ENCODE measurements at regions of chr9 and their contacts with region 1.

Region 1: DNA sequence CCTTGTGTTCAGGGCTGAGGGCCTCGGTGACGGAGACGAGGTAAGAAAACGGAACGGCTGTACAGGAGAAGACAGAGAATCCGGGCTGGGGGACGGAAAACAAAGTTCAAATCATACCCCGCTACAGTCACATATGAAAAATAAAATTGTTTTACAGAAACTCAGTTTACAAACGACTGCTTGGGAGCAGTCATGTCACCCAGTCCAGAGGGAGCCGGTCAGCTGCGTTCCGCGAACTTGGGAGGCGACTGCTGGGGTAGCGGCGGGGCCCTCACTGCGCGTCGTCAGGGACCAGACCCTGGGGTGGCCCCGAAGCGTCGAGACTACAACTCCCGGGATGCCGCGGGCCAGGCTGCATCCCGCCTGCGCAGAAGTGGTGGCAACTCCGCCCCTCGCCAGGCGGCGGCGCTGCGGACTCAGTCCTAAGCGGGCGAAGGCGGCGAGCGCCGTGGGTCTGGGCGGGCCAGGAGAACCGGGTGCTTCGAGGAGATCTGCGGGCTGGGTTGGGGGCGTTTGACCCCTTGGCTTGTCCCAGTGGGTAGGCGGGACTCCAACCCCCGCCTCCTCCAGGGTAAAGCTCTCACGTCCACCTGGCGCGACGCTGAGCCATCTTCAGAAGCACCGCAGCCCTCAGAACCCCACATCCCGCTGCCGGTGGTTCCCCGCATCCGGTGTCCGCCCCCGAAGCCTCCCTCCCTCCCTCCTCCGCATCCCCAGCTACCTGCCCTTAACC is 4.0 kb downstream of the SIT1 start:
- DNase-seq: peak; percentile 91 to 94 (median 94)
- H3K4me3 ChIP-seq: peak overlapping the region; percentile 46 to 91 (median 84)
- H3K27ac ChIP-seq: peak overlapping the region; percentile 83 to 87
- H3K4me1 ChIP-seq: peaks cover 0 to 61% (median 34%) of the 10 kb centered on the region in 4 experiments
- H3K27me3 ChIP-seq: no peaks in the 10 kb centered on the region

Region 2: GRCh38 chr9:35538361-35539234 is 108.1 kb before region 1 on chr9:
- CTCF ChIA-PET with region 1: no interaction called
- POLR2A ChIA-PET with region 1: no interaction called
- DNase-seq: no peak
- H3K4me3 ChIP-seq: no peak overlapping the region
- H3K27ac ChIP-seq: no peak overlapping the region
- H3K4me1 ChIP-seq: peaks cover 0 to 13% (median under 1%) of the 10 kb centered on the region in 4 experiments
- H3K27me3 ChIP-seq: no peaks in the 10 kb centered on the region

Region 3: DNA sequence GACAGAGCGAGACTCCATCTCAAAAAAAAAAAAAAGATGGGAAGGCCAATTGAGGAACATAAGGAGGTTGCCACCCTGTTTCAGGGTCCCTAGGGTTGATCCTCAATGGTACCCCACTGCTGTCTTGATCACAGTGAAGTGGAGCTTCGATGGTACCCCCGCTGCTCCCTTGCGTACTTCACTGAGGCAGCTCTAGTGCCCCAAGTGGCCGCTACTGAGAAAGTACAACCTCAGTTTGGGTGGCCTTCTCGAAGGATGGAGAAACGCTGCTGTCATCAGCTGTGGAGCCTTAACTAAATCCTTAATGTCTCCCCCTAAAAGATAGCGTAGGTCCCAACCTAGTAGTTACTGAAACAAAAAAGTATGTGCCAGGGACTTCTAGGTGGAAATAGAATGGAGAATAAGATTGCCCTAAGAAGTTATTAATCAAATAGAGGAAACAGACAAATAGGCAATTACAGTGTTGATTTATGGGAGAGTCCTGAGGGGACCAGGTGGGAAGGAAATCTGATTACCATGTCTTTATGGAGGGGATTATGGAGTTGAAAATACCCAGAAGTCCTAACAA is 35.4 kb before region 1 on chr9:
- CTCF ChIA-PET with region 1: interaction called, 95 read pairs
- POLR2A ChIA-PET with region 1: no interaction called
- DNase-seq: peak; percentile 58 to 76 (median 75)
- H3K4me3 ChIP-seq: no peak overlapping the region
- H3K27ac ChIP-seq: no peak overlapping the region
- H3K4me1 ChIP-seq: peaks cover 0 to 7% (median 6%) of the 10 kb centered on the region in 4 experiments
- H3K27me3 ChIP-seq: no peaks in the 10 kb centered on the region

Region 4: DNA sequence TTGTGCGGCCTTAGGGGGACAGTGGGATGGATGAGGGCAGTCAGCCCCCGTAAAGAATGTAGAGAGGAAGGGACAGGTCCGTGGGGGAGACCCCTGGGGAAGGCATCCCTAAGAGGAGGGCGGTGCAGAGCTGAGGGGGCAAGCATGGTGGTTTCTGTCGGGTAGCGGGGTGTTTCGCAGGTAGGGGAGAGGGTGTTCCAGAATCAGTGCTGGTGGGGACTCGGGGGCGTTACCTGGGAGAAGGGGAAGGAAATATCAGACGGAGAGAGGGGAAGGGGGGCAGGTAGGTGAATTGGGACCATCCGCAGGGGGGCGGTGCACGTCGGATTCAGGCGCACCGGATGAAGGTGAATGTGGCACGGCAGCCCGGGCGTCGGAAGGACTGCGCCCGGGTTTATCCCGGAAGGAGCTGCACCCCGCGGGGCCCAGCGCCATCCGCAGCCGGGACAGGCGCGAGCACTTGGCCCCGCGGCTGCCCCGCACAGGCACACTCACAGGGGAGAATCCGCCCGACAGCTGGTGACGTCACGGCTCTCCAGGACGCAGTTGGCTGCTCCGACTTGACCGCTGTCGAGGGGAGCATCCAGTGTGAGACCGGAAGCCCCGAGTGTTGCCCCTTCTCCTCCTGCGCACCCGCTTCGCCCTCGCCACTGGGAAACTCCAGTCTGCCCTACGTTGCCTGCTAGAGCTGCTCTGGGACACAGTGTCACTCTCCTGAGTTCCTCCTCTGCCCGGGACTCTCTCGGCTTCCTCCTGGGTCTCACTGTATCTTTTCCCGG is 29.8 kb before region 1 on chr9:
- CTCF ChIA-PET with region 1: interaction called, 95 read pairs
- POLR2A ChIA-PET with region 1: no interaction called
- DNase-seq: peak in 2 of 3 donors; percentile 53 to 66
- H3K4me3 ChIP-seq: peak overlapping the region; percentile 16 to 84 (median 67)
- H3K27ac ChIP-seq: no peak overlapping the region
- H3K4me1 ChIP-seq: peaks cover 0 to 49% (median 33%) of the 10 kb centered on the region in 4 experiments
- H3K27me3 ChIP-seq: no peaks in the 10 kb centered on the region

Region 5: GRCh38 chr9:35657546-35658136 is 10.9 kb after region 1 on chr9 and contains the start of gene RMRP:
- CTCF ChIA-PET with region 1: interaction called, 117 read pairs
- POLR2A ChIA-PET with region 1: interaction called, 14 read pairs
- DNase-seq: peak; percentile 95 to 99 (median 96)
- H3K4me3 ChIP-seq: peak within 1 kb of the TSS; percentile 81 to 89 (median 84)
- H3K27ac ChIP-seq: peak within 1 kb of the TSS; percentile 100
- H3K4me1 ChIP-seq: peaks cover 11 to 55% (median 40%) of the 10 kb centered on the region in 4 experiments
- H3K27me3 ChIP-seq: no peaks in the 10 kb centered on the region

Region 6: GRCh38 chr9:35771534-35771933 is 124.8 kb after region 1 on chr9:
- CTCF ChIA-PET with region 1: no interaction called
- POLR2A ChIA-PET with region 1: no interaction called
- DNase-seq: peak in 1 of 3 donors; percentile 53
- H3K4me3 ChIP-seq: no peak overlapping the region
- H3K27ac ChIP-seq: peak overlapping the region in 1 of 2 experiments; percentile 50
- H3K4me1 ChIP-seq: peaks cover 13 to 40% (median 17%) of the 10 kb centered on the region in 4 experiments
- H3K27me3 ChIP-seq: no peaks in the 10 kb centered on the region

Region 7: DNA sequence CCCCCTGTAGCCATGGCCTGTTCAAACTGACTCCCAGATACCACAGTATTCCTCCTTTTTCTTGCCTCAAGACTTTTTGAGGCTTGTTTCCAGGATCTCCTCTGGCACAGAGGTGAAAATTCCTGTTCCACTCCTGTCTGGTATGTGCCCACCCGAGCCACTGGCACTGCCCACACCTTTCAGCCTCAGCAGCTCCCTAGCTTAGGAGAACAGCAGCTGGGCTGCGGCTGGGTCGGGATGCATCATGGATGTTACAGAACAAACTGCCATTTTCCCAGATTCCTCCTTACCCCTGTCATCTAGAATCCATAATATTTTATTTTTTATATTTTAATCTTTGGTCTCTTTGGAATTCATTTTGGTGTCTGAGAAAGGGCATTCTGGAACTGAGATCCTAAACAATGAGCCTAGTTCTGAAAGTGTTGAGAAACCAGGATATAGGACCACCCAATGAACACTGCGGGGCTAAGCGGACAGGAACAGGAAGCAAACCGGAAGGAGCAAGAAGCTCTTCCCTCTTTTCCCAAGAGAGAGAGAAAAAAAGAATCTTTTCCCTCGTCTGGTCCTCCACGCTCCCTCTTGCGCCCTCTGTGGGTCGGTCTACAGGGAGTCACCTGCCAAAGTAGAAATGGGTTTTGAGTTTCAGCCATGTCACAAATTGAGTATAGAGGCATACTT is 298.8 kb after region 1 on chr9:
- CTCF ChIA-PET with region 1: no interaction called
- POLR2A ChIA-PET with region 1: no interaction called
- DNase-seq: peak; percentile 36 to 61 (median 52)
- H3K4me3 ChIP-seq: peak overlapping the region in 2 of 7 experiments; percentile 20 to 32
- H3K27ac ChIP-seq: no peak overlapping the region
- H3K4me1 ChIP-seq: peaks cover 2 to 28% (median 16%) of the 10 kb centered on the region in 4 experiments
- H3K27me3 ChIP-seq: no peaks in the 10 kb centered on the region

Measured in common myeloid progenitor, CD34-positive (primary cell).